PC-3 (cell line): ENCODE measurements at regions of chr18 and their contacts with region 1.

Region 1: GRCh38 chr18:22563098-22563707 is 145.5 kb upstream of the CTAGE1 start:
- DNase-seq: peak; percentile 93
- ATAC-seq: peak; percentile 73
- H3K4me3 ChIP-seq: peak overlapping the region; percentile 29; the same call in 1 of the 2 replicates
- H3K27ac ChIP-seq: peak overlapping the region; percentile 16; the same call in 1 of the 2 replicates
- H3K4me1 ChIP-seq: peaks cover 25% of the 10 kb centered on the region
- H3K27me3 ChIP-seq: no peaks in the 10 kb centered on the region
- CTCF ChIP-seq: peak; percentile 90

Region 2: GRCh38 chr18:21897811-21898210 is 665.4 kb before region 1 on chr18:
- CTCF ChIA-PET with region 1: no interaction called
- POLR2A ChIA-PET with region 1: no interaction called
- intact Hi-C with region 1: loop called (anchors 5 kb)
- DNase-seq: peak; percentile 77
- ATAC-seq: peak; percentile 74
- H3K4me3 ChIP-seq: no peak overlapping the region
- H3K27ac ChIP-seq: no peak overlapping the region
- H3K4me1 ChIP-seq: no peaks in the 10 kb centered on the region
- H3K27me3 ChIP-seq: no peaks in the 10 kb centered on the region
- CTCF ChIP-seq: peak; percentile 87

Region 3: GRCh38 chr18:21997207-21998143 is 565.7 kb before region 1 on chr18:
- CTCF ChIA-PET with region 1: no interaction called
- POLR2A ChIA-PET with region 1: no interaction called
- intact Hi-C with region 1: loop called (anchors 10 kb)
- DNase-seq: peak; percentile 50
- ATAC-seq: peak; percentile 67
- H3K4me3 ChIP-seq: no peak overlapping the region
- H3K27ac ChIP-seq: no peak overlapping the region
- H3K4me1 ChIP-seq: no peaks in the 10 kb centered on the region
- H3K27me3 ChIP-seq: no peaks in the 10 kb centered on the region
- CTCF ChIP-seq: peak; percentile 92

Region 4: DNA sequence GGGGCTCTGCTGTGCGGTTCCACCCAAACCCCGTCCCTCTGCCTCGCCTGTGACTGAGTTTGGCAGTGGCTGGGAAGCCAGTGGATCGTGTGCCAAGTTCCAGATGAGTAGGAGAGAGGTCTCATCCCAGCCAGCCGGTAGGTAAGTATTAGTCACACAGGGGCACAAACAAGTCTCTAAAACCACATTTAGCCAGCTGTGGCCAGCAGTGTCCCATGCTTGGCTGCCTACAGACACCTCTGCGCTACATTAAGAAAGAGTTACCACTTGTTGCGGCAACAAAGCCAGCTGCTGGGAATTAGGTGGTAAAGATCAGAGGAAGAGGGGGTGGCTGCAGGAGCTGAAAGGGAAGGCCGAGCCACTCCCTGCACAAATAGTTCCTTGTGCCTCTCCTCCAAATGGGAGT is 312.6 kb before region 1 on chr18:
- CTCF ChIA-PET with region 1: no interaction called
- POLR2A ChIA-PET with region 1: no interaction called
- intact Hi-C with region 1: loop called (anchors 10 kb)
- DNase-seq: peak; percentile 92
- ATAC-seq: peak; percentile 100
- H3K4me3 ChIP-seq: no peak overlapping the region
- H3K27ac ChIP-seq: peak overlapping the region; percentile 49
- H3K4me1 ChIP-seq: peaks cover 16% of the 10 kb centered on the region
- H3K27me3 ChIP-seq: no peaks in the 10 kb centered on the region
- CTCF ChIP-seq: no peak; the same call in 1 of the 2 replicates

Region 5: DNA sequence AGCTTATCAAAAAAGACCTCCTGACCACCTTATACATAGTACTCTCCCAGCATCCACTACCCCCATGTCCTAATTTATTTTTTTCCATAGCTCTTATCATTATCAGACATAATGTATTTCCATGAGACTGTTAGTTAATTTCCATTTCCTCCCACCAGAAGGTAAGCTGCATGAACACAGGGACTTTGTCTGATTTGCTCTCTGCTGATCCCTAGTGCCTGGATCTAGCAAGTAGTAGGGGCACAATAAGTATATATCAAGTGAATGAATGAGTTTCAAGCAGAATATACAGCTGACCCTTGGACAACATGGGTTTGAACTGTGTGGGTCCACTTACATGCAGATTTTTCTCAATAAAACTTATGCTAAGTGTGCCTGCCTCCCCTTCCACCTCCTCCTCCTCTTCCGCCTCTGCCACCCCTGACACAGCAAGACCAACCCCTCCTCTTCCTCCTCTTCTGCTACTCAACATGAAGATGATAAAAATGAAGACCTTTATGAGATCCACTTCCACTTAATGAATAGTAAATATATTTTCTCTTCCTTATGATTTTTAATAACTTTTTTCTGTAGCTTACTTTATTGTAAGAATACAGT is 199.2 kb before region 1 on chr18:
- CTCF ChIA-PET with region 1: no interaction called
- POLR2A ChIA-PET with region 1: no interaction called
- intact Hi-C with region 1: loop called (anchors 5 kb)
- DNase-seq: peak; percentile 34
- ATAC-seq: peak; percentile 45; the same call in 1 of the 2 replicates
- H3K4me3 ChIP-seq: no peak overlapping the region
- H3K27ac ChIP-seq: no peak overlapping the region
- H3K4me1 ChIP-seq: peaks cover 5% of the 10 kb centered on the region; the same call in 1 of the 2 replicates
- H3K27me3 ChIP-seq: no peaks in the 10 kb centered on the region
- CTCF ChIP-seq: peak; percentile 38; the same call in 1 of the 2 replicates

Region 6: DNA sequence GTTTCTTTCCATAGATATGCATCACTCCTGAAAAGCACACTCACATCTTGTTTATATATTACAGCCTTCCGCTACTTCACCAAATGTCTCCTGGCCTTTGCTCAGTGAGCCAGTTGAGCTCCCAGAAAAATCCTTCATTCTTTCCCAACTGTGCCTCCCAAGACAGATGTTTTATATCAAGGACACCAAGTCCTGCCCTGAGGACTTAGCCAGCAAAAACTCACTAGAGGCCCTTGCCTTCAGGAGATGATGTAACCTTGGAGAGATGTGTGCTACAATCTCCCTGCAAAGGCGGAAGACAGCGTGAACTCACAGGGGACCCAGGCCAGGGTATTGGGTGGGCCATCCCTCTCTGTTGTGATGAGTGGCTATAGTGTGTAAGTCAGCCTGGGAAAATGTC is 59.4 kb before region 1 on chr18:
- CTCF ChIA-PET with region 1: no interaction called
- POLR2A ChIA-PET with region 1: interaction called, 3 read pairs
- intact Hi-C with region 1: loop called (anchors 2 kb)
- DNase-seq: no peak
- ATAC-seq: no peak
- H3K4me3 ChIP-seq: no peak overlapping the region
- H3K27ac ChIP-seq: peak overlapping the region; percentile 93
- H3K4me1 ChIP-seq: peaks cover 26% of the 10 kb centered on the region
- H3K27me3 ChIP-seq: no peaks in the 10 kb centered on the region
- CTCF ChIP-seq: no peak

Region 7: DNA sequence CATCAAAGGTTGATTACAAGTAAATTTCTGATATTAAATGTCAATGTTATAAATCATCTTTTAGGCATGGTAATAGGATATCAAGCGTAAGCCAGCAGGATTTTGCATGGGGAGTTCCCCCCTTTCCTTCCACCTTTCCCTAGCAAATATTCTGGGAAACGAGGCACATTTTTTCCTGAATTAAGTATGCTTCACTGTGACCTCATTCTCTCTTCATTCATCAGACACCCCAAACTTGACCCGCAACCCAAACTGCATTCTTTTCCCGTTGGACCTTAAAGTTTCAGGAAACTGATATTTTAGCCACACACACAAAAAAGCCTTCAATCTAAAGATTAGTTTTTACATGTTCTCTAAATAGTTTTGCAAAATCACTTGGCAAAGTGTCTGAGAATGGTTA is 69.0 kb after region 1 on chr18:
- CTCF ChIA-PET with region 1: no interaction called
- POLR2A ChIA-PET with region 1: no interaction called
- intact Hi-C with region 1: no loop called
- DNase-seq: no peak
- ATAC-seq: no peak
- H3K4me3 ChIP-seq: no peak overlapping the region
- H3K27ac ChIP-seq: no peak overlapping the region
- H3K4me1 ChIP-seq: no peaks in the 10 kb centered on the region
- H3K27me3 ChIP-seq: no peaks in the 10 kb centered on the region
- CTCF ChIP-seq: no peak